Esophagus squamous epithelium (tissue), 5 donors: ENCODE measurements at regions of chr1 and their contacts with region 1.

Region 1: DNA sequence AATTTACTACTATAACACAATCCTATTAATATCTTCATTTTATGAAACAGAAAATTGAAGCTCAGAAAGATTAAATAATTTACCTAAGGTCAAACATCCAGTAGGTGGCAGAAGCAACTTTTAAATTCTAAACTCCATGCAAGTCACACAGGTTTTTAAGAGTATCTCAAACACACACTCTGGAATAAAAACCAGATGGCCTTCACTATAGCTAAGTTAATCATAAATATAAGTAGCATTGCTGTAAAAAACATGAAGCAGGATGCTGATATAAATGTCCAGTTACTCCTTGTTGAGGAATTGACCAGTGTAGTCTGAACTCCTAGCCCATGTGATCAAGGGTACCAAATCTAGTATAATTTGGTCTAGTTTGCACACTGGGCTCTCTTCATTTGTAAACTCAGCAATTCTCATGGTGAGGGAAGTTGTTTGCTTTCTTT is 9.4 kb upstream of the FMO3 start:
- DNase-seq: no peak
- H3K4me3 ChIP-seq: no peak overlapping the region
- H3K27ac ChIP-seq: peak overlapping the region; percentile 38 to 75 (median 62)
- H3K4me1 ChIP-seq: peaks cover 5 to 30% (median 6%) of the 10 kb centered on the region in 3 donors
- H3K27me3 ChIP-seq: no peaks in the 10 kb centered on the region
- CTCF ChIP-seq: peak; percentile 35 to 69 (median 52)
- POLR2A ChIP-seq: no peak

Region 2: GRCh38 chr1:171141688-171142415 is 60.5 kb after region 1 on chr1:
- intact Hi-C with region 1: no loop called
- DNase-seq: no peak
- H3K4me3 ChIP-seq: peak overlapping the region in 1 of 4 donors; percentile 46
- H3K27ac ChIP-seq: peak overlapping the region; percentile 70 to 88 (median 82)
- H3K4me1 ChIP-seq: peaks cover 0 to 70% (median 44%) of the 10 kb centered on the region in 3 donors
- H3K27me3 ChIP-seq: no peaks in the 10 kb centered on the region
- CTCF ChIP-seq: no peak
- POLR2A ChIP-seq: no peak

Region 3: GRCh38 chr1:171188388-171189266 is 107.3 kb after region 1 on chr1:
- intact Hi-C with region 1: loop called (anchors 10 kb)
- DNase-seq: no peak
- H3K4me3 ChIP-seq: peak overlapping the region in 2 of 4 donors; percentile 44 to 64
- H3K27ac ChIP-seq: peak overlapping the region in 2 of 4 donors; percentile 72 to 81
- H3K4me1 ChIP-seq: peaks cover 0 to 53% (median 4%) of the 10 kb centered on the region in 3 donors
- H3K27me3 ChIP-seq: no peaks in the 10 kb centered on the region
- CTCF ChIP-seq: peak; percentile 53 to 85 (median 76)
- POLR2A ChIP-seq: no peak

Region 4: DNA sequence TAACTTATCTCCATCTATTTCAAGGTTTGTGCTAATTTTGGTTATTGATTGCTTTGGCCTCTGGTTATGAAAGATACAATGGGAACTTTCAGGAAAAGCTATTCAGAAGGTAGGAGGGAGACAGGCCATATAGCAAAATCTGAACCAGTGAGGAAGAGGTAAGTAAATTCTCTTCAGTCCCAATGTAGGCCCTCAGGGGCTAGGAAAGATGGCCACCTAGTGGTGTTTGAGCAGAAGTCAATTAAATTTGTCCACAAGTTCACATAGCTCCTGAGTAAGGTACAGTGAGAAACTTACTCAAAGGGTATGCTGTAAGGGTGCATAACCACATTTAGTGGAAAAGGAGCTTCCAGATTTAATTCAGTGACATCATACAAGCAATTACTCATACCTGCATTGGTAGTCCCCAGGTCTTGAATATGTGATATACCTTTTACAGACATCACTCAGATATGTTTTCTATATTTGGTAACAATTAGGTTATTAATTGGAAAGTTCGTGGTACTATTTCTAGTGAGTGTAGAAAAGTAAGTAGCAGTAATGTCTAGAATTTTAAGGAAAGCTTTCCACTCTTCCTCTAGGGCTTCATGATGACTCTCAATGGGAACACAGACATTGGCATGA is 145.5 kb after region 1 on chr1:
- intact Hi-C with region 1: loop called (anchors 5 kb)
- DNase-seq: no peak
- H3K4me3 ChIP-seq: no peak overlapping the region
- H3K27ac ChIP-seq: no peak overlapping the region
- H3K4me1 ChIP-seq: peaks cover 3 to 33% (median 12%) of the 10 kb centered on the region in 3 donors
- H3K27me3 ChIP-seq: no peaks in the 10 kb centered on the region
- CTCF ChIP-seq: peak in 5 of 6 experiments; percentile 65 to 86 (median 78)
- POLR2A ChIP-seq: no peak

Region 5: GRCh38 chr1:171313835-171314320 is 232.5 kb after region 1 on chr1 and contains the start of gene FMO4:
- intact Hi-C with region 1: loop called (anchors 10 kb)
- DNase-seq: peak; percentile 72
- H3K4me3 ChIP-seq: peak within 1 kb of the TSS in 3 of 4 donors; percentile 25 to 54 (median 30)
- H3K27ac ChIP-seq: peak within 1 kb of the TSS; percentile 66 to 80 (median 78)
- H3K4me1 ChIP-seq: peaks cover 0 to 20% (median 9%) of the 10 kb centered on the region in 3 donors
- H3K27me3 ChIP-seq: no peaks in the 10 kb centered on the region
- CTCF ChIP-seq: peak; percentile 66 to 95 (median 88)
- POLR2A ChIP-seq: peak in 1 of 4 donors; percentile 29
- total RNA-seq, gene FMO4: 1.3 to 9.1 (median 4.6) TPM